Activated CD8-positive, alpha-beta memory T cell treated with anti-CD3 and anti-CD28 coated beads, Interleukin-2, amount 10 ng/mL, durations not matched to agents 7 days and 5 days (primary cell): ENCODE measurements at regions of chr16 and their contacts with region 1.

Region 1: GRCh38 chr16:69123910-69124309 is 8.5 kb downstream of the CHTF8 start:
- DNase-seq: peak; percentile 75
- ATAC-seq: peak; percentile 67
- H3K4me3 Mint-ChIP-seq: no peak overlapping the region
- H3K27ac Mint-ChIP-seq: no peak overlapping the region
- H3K4me1 Mint-ChIP-seq: peaks cover 11% of the 10 kb centered on the region
- H3K27me3 Mint-ChIP-seq: no peaks in the 10 kb centered on the region

Region 2: GRCh38 chr16:68520649-68521086 is 603.2 kb before region 1 on chr16:
- CTCF ChIA-PET with region 1: interaction called, 15 read pairs
- DNase-seq: peak; percentile 92
- ATAC-seq: peak; percentile 94
- H3K4me3 Mint-ChIP-seq: peak overlapping the region; percentile 32
- H3K27ac Mint-ChIP-seq: no peak overlapping the region
- H3K4me1 Mint-ChIP-seq: peaks cover 9% of the 10 kb centered on the region
- H3K27me3 Mint-ChIP-seq: peaks cover 2% of the 10 kb centered on the region

Region 3: DNA sequence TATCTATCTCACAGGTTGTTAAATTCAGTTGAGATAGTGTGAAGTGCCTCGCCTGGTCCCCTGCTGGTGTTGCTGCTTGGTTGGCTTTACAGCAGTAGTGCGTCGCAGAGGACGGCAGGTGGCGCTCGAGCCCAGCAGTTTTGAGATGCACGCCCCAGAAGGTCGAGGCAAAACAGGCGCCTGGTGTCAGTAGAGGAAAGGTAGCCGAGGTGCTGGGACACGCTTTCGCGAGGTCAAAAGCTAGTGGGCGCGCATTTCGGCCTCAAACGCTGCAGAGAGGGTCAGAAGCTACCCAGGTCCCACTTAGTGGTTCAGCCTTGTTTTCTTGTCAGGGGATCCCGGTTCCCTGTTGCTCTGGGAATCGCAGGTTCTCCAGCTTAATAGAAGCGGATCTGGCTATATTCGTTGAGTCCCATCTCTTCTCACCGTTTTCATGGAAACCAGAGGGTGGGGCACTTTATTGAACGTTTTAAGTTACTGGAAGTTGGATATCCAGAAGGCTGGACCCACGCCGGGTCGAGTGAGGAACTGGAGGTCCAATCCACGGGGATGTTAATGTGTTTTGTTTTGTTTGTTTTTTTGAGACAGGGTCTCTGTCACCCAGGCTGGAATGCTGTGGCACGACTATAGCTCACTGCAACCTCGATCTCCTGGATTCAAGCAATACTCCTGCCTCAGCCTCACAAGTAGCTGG is 595.1 kb before region 1 on chr16:
- CTCF ChIA-PET with region 1: interaction called, 14 read pairs
- DNase-seq: peak; percentile 91
- ATAC-seq: peak; percentile 82
- H3K4me3 Mint-ChIP-seq: peak overlapping the region; percentile 77
- H3K27ac Mint-ChIP-seq: no peak overlapping the region
- H3K4me1 Mint-ChIP-seq: peaks cover 22% of the 10 kb centered on the region
- H3K27me3 Mint-ChIP-seq: no peaks in the 10 kb centered on the region

Region 4: GRCh38 chr16:68843482-68844210 is 280.3 kb before region 1 on chr16 and contains the start of gene TANGO6:
- CTCF ChIA-PET with region 1: interaction called, 19 read pairs
- DNase-seq: peak; percentile 93
- ATAC-seq: peak; percentile 94
- H3K4me3 Mint-ChIP-seq: peak within 1 kb of the TSS; percentile 89
- H3K27ac Mint-ChIP-seq: peak within 1 kb of the TSS; percentile 89
- H3K4me1 Mint-ChIP-seq: peaks cover 32% of the 10 kb centered on the region
- H3K27me3 Mint-ChIP-seq: no peaks in the 10 kb centered on the region
- total RNA-seq, gene TANGO6: 20.2 to 22.3 TPM

Region 5: GRCh38 chr16:69105489-69106361 is 18.2 kb before region 1 on chr16 and contains the start of gene HAS3:
- CTCF ChIA-PET with region 1: interaction called, 47 read pairs
- DNase-seq: peak; percentile 59
- ATAC-seq: peak; percentile 76
- H3K4me3 Mint-ChIP-seq: peak within 1 kb of the TSS; percentile 76
- H3K27ac Mint-ChIP-seq: no peak within 1 kb of the TSS
- H3K4me1 Mint-ChIP-seq: peaks cover 15% of the 10 kb centered on the region
- H3K27me3 Mint-ChIP-seq: peaks cover 48% of the 10 kb centered on the region
- total RNA-seq, gene HAS3: 0.29 to 0.47 TPM

Region 6: DNA sequence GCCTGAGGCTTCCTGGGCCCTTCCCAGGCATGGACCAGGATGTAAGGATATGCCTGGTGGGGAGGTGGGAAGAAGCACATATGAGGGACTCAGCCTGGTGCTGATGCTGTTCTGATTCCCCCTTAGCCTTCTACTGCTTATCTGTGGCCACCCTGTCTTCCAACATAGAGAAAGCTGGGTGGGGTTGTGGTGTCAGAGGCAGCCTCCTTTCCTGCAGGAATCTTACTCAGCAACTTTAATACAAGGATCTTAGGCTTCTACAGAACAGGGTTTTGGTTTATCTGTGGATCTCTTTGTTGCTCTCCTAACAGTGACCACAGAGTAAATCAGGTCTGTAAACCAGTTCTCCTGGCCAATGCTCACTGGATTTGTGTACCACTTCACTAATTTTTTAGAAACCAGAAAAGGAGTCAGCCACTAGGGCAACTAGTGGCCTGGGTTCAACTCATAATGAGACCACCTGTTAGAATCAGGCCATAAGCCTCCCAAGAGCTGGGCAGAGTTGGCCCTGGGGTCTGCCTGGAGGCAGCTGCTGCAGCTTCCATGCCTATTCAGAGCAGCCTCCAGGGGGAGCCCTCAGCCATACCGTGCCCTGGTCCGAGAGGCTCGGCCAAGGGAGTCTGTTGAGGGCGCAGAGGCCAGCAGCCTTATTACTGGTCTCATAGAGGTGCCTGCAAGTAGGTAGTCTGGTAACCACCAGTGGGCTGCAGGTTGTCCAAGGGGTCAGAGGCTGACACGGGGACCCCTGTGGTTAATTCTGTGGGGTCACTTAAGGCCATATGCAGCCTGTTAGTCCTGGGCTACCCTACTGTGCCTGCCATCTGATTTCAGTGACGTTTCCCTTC is 11.4 kb before region 1 on chr16:
- CTCF ChIA-PET with region 1: interaction called, 47 read pairs
- DNase-seq: peak; percentile 65
- ATAC-seq: peak; percentile 74
- H3K4me3 Mint-ChIP-seq: no peak overlapping the region
- H3K27ac Mint-ChIP-seq: no peak overlapping the region
- H3K4me1 Mint-ChIP-seq: peaks cover 2% of the 10 kb centered on the region
- H3K27me3 Mint-ChIP-seq: peaks cover 11% of the 10 kb centered on the region